ENCODE measurements at regions of chr10 and their contacts with region 1.

Region 1: GRCh38 chr10:7525314-7526016 is 114.6 kb upstream of the SFMBT2 start:
- DNase-seq: peak in 1 of 2 donors; percentile 35
- H3K4me3 ChIP-seq: no peak overlapping the region
- H3K27ac ChIP-seq: no peak overlapping the region
- H3K4me1 ChIP-seq: no peaks in the 10 kb centered on the region
- H3K27me3 ChIP-seq: peaks cover 0 to 7% of the 10 kb centered on the region in 2 donors
- CTCF ChIP-seq: peak; percentile 26 to 82 (median 82)
- POLR2A ChIP-seq: no peak

Region 2: DNA sequence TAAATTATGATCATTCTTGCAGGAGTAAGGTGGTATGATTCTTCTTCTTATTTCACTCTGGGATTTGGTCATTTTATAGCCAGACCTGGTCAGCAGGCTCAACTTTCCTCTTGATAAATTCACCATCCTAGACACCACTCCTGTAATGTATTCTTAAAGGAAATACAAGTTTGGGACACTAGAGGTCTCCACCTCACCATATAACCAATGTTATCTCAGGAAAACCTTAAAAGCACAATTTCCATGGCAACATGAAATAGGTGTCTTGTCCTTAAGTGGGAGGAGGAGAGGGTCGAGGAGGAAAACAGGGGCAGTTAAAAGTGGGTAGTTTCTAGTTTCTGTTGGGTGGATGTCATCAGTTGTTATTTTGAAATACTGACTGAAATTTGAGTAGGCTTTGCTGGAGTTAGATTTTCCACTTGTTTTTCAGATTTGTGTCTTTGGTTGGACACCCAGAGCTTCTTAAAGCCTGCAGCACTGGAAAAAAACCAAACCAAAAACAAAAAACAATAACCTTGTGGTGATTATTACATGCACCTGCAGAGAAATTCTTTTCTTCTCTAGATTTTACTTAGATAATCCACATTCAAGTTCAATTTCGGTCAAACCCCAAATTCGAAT is 1108.5 kb before region 1 on chr10:
- intact Hi-C with region 1: loop called (anchors 10 kb)
- DNase-seq: no peak
- H3K4me3 ChIP-seq: no peak overlapping the region
- H3K27ac ChIP-seq: no peak overlapping the region
- H3K4me1 ChIP-seq: no peaks in the 10 kb centered on the region
- H3K27me3 ChIP-seq: no peaks in the 10 kb centered on the region
- CTCF ChIP-seq: peak in 2 of 3 donors; percentile 44 to 65
- POLR2A ChIP-seq: no peak

Region 3: DNA sequence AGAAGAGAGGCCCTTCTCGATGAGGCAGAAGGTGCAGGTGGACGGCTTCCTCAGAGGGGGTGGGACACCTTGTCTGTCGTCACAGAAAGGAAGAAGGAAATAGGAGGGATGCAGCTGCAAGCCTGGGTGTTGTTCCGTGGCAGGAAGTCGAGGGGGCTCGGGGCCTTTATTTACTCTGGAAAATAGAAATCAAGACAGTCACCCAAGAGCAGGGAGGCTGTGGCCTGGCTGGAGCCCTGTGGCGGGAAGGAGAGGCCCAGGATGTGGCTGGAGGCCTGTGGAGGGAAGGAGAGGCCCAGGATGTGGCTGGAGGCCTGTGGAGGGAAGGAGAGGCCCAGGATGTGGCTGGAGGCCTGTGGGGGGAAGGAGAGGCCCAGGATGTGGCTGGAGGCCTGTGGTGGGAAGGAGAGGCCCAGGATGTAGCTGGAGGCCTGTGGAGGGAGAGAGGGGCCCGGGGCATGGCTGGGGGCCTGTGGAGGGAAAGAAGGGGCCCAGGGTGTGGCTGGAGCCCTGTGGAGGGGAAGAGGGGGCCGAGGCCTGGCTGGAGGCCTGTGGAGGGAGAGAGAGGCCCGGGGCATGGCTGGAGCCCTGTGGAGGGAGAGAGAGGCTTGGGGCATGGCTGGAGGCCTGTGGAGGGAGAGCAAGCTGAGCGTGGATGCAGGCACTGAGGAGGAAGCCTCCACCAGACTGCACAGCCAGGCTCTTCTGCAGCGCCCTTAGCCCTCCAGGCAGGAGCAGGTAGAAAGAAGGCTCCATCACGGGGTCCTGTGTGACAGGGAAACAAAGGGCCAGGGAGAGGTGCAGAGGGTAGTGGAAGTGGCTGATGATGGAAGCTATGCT is 17.4 kb before region 1 on chr10:
- intact Hi-C with region 1: no loop called
- DNase-seq: no peak
- H3K4me3 ChIP-seq: no peak overlapping the region
- H3K27ac ChIP-seq: no peak overlapping the region
- H3K4me1 ChIP-seq: no peaks in the 10 kb centered on the region
- H3K27me3 ChIP-seq: no peaks in the 10 kb centered on the region
- CTCF ChIP-seq: no peak
- POLR2A ChIP-seq: no peak

Region 4: GRCh38 chr10:7687228-7687907 is 161.9 kb after region 1 on chr10:
- intact Hi-C with region 1: loop called (anchors 5 kb)
- DNase-seq: peak; percentile 74 to 78
- H3K4me3 ChIP-seq: no peak overlapping the region
- H3K27ac ChIP-seq: no peak overlapping the region
- H3K4me1 ChIP-seq: no peaks in the 10 kb centered on the region
- H3K27me3 ChIP-seq: no peaks in the 10 kb centered on the region
- CTCF ChIP-seq: peak; percentile 67 to 95 (median 78)
- POLR2A ChIP-seq: no peak